ENCODE measurements at regions of chr1 and their contacts with region 1.

Region 1: DNA sequence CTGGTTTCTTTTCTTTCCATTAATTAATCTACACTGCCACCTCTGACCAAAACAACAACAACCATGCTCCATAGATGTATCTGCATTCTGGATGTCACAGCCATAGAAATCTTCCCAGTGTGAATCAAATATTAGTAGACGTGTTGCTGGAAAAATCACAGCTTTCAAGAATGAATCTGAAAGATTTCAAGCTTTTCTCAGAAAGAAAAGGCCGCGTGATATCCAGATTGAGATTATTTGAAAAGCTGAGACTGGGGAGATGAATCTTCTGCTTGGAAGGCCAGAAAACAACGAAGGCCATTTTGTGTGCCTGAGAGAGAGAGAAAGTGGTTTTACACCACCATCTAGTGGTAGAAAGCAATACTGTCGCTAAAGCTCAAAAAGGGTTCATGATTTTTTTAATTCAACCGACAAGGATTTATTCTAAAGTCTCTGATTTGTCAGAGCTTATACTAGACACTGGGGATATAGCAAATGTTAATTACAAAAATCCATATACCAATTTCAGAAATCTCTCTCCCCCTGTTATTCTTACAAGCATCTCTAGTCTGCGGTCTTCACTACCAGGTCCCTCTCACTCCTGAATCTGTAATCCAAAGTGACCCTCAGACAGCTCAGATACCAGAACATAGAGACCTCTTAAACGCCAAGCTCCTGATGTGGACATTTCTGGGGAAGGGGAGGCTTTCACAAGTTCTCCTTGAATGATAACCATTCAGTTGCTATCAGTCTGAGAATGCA is 87.5 kb upstream of the SGIP1 start:
- DNase-seq: peak in 22 of 42 donors; percentile 6 to 79 (median 38)

Region 2: GRCh38 chr1:66253330-66253921 is 193.0 kb before region 1 on chr1:
- intact Hi-C with region 1: loop called (anchors 5 kb)
- DNase-seq: peak in 8 of 42 donors; percentile 36 to 83 (median 67)

Region 3: DNA sequence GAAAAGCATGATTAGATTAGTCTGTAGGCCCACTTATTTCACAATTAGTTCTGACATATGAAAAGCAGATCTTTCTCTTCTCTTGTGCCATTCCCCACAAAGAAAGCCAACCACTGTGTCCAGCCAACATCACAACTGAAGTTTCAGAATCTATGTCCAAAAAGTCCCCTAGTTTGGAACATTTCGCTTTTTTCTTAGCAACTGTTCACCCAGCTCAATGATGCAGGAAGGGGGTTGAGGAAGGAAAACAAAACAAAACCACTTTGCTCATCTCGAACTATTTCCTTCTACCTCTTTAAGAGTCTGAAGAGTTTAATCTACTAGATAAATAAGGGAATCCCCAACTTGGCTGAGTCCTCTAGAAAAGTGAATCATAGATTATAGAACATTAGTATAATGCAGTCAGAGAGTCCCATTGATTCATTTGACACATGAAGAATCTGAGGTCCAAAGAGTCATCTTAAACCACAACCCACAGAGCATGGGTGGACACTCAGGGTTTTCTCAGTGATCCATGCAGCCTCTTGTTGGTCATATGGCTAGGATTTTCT is 71.8 kb before region 1 on chr1:
- intact Hi-C with region 1: loop called (anchors 10 kb)
- DNase-seq: peak in 1 of 42 donors; percentile 21